ENCODE measurements at regions of chr16 and their contacts with region 1.

Region 1: DNA sequence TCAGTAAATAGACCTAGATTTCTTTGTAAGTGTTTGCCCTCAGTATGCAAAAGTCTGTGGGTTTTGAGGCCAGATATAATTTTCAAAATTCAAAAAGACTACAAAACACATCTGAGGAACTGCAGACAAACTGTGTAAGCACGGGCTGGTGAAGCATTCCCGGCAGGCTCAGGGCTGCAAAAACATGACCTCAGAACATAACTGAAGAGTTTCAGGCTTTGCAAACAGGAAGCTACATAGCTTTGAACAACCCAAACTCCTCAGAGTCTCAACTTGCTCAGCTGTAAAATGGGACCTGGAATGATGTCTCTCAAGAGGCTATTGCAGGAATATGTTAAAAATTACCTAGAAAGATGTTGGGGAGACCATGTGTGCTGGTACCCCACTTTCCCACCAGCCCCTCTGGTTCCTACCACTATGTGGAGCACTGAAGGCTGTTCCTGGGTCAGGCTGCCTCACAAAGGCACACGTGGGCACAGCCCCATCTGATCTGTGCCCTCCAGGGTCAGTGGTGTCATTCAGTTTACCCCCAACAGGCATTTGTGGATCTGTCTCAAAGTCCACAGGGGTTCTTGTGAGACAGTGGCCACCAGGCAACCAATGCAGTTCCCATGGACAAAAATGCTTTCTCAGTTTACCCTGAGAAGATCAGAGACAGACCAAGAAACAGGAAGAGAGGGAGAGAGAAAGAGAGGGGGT is 72.9 kb downstream of the CREBBP start:
- DNase-seq: no peak
- H3K4me3 ChIP-seq: no peak overlapping the region
- H3K27ac ChIP-seq: no peak overlapping the region
- H3K4me1 ChIP-seq: peaks cover 26% of the 10 kb centered on the region
- H3K27me3 ChIP-seq: no peaks in the 10 kb centered on the region
- CTCF ChIP-seq: no peak
- EP300 ChIP-seq: no peak
- POLR2A ChIP-seq: no peak

Region 2: DNA sequence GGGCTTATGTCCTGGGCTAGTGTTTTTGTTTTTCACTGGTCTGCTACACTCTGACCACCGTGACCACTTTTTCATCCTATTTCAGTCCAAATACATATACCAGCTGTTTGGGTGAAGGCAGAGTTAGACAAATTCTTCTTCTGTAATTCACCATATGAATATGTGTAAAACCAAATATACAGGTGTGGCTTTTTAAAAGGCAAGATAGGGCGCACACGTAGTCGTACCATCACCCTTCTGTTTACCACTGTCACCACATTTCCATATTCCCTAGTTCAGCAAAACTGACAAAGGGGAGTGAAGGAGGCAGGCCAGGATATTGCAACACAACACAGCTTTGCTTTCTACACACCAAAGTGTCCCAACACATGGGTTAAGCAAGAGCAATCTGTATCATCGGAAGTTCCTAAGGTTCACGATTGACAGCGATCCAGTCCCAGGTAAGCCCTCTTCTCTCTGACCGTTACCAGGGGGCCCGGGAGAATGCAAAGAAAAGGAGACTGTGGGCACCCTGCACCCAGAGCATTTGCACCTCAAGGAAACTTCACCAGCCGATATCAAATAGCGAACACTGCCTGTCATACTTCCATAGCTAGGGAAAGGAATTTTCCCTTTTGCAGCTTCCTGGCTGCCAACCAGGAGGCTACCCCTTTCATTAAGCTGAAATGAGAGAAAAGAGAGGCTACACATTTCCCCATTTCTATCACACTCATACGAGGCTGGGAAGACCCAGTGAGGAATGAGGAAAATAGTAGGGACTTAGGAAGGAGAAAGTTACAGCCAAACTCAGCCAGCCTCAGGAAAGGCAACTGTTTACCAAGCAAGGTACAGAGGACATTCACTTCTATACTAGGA is 49.8 kb after region 1 on chr16:
- intact Hi-C with region 1: loop called in 2 of 4 experiments (anchors 10 kb)
- DNase-seq: peak in 2 of 5 donors; percentile 27 to 64
- H3K4me3 ChIP-seq: no peak overlapping the region
- H3K27ac ChIP-seq: peak overlapping the region in 1 of 2 donors; percentile 52
- H3K4me1 ChIP-seq: peaks cover 34% of the 10 kb centered on the region
- H3K27me3 ChIP-seq: no peaks in the 10 kb centered on the region
- CTCF ChIP-seq: no peak
- EP300 ChIP-seq: no peak
- POLR2A ChIP-seq: no peak

Region 3: DNA sequence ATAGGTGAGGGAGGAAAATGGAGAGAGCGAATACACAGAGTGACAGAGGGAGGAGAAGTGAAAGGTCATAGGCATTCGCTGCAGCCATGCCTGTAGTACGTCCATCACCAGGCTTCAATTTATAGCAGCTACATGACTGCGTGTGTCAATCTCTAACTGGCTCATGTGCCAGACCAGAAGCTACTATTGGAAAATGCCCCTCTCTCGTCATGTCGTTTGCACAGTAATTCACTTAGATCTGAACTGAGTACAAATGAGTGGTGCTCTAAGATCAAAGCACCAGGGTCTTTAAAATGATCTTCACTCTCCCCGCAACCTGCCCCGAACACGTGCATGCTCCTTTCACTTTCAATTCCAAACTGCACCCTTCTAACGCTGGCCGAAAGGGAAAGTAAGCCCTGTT is 257.4 kb after region 1 on chr16:
- intact Hi-C with region 1: no loop called
- DNase-seq: no peak
- H3K4me3 ChIP-seq: no peak overlapping the region
- H3K27ac ChIP-seq: no peak overlapping the region
- H3K4me1 ChIP-seq: peaks cover 1% of the 10 kb centered on the region
- H3K27me3 ChIP-seq: no peaks in the 10 kb centered on the region
- CTCF ChIP-seq: no peak
- EP300 ChIP-seq: no peak
- POLR2A ChIP-seq: no peak